Heart right ventricle (tissue), 16 donors: ENCODE measurements at regions of chr17 and their contacts with region 1.

Region 1: DNA sequence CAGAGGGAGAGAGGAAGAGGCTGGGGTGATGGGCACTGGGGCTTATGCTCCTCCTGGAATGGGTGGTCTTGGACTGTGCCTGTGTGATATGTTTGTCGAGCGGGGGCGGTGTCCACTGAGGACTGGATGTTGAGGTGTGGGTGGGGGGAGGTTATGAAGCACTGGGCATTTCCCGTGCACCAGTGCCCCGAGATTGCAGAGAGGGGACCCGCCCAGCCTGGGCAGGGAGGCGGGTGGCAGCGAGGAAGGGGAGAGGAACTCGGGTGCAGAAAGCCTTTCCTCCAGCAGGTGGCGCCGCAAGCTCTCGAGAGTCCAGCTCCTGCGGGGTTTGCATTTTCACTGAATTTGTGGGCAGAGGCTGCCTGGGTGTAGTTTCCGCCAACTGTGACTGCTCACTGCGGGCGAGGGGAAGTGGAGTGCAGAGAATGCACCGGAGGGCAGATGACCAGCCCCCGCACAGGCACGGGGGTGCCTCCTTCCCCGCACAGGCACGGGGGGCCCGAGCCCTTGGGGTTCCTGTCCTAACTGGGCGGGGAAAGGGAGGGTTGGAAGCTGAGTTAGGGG is 190.6 kb downstream of the SEC14L1 start:
- DNase-seq: peak; percentile 94 to 95
- ATAC-seq: peak; percentile 86 to 94 (median 91)
- H3K4me3 ChIP-seq: peak overlapping the region in 6 of 10 donors; percentile 26 to 46 (median 34)
- H3K27ac ChIP-seq: peak overlapping the region in 7 of 10 donors; percentile 15 to 80 (median 62)
- H3K4me1 ChIP-seq: peaks cover 0 to 40% (median 12%) of the 10 kb centered on the region in 9 donors
- H3K27me3 ChIP-seq: no peaks in the 10 kb centered on the region
- CTCF ChIP-seq: peak; percentile 92 to 98 (median 96)

Region 2: DNA sequence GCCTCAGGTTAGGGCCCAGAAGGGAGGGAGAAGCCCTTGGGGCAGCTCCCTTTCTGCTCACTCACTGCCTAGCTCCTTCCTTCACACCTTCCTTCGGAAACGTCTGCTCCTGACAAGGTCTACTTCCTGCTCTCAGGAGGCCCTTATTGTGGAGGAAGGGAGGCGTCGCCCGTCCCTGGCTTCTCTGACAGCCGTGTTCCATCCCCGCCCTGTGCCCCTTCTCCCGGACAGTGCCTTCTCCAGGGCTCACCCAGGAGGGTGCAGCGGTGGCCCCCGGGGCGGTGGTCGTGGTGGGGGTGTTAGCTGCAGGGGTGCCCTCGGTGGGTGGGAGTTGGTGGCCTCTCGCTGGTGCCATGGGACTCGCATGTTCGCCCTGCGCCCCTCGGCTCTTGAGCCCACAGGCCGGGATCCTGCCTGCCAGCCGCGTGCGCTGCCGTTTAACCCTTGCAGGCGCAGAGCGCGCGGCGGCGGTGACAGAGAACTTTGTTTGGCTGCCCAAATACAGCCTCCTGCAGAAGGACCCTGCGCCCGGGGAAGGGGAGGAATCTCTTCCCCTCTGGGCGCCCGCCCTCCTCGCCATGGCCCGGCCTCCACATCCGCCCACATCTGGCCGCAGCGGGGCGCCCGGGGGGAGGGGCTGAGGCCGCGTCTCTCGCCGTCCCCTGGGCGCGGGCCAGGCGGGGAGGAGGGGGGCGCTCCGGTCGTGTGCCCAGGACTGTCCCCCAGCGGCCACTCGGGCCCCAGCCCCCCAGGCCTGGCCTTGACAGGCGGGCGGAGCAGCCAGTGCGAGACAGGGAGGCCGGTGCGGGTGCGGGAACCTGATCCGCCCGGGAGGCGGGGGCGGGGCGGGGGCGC is 41.3 kb after region 1 on chr17:
- intact Hi-C with region 1: loop called in 3 of 10 experiments (anchors 5 kb)
- DNase-seq: peak; percentile 88 to 92
- ATAC-seq: peak; percentile 56 to 75 (median 66)
- H3K4me3 ChIP-seq: peak overlapping the region; percentile 81 to 100 (median 92)
- H3K27ac ChIP-seq: peak overlapping the region; percentile 89 to 99 (median 97)
- H3K4me1 ChIP-seq: peaks cover 46 to 76% (median 72%) of the 10 kb centered on the region in 9 donors
- H3K27me3 ChIP-seq: no peaks in the 10 kb centered on the region
- CTCF ChIP-seq: peak in 2 of 9 donors; percentile 18 to 21

Region 3: DNA sequence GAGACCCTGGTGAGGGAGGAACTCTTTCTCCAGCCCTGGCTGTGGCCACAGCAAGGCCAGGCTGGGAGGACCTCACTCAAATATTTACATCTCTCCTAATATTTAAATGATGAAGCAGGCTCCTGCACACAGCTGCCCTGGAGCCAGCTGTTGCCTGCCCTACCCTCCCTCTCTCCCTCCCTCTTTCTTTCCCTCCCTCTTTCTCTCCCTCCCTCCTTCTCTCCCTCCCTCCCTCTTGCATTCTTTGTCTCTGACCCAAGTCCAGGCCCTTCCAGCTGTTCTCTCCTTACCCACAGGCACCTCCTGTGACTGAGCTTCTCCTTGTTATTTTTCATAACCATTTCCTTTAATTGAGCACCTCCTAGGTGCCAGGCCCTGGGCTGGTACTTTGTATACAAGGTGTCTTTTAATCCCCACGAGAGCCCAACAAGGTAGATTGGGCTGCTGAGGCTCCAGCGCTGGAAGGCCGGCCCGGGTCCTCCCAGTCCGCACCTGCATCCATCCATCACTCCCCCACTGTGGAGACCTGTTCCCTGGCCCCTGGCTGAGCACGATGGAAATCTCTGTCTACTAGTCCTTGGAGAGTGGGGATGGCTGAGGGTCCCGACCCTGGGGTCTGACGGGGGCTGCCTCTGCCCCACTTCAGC is 51.7 kb after region 1 on chr17:
- intact Hi-C with region 1: loop called in 2 of 10 experiments (anchors 5 to 10 kb)
- DNase-seq: peak in 1 of 2 donors; percentile 14
- ATAC-seq: peak in 5 of 8 donors; percentile 11 to 24 (median 15)
- H3K4me3 ChIP-seq: no peak overlapping the region
- H3K27ac ChIP-seq: peak overlapping the region in 9 of 10 donors; percentile 60 to 91 (median 79)
- H3K4me1 ChIP-seq: peaks cover 58 to 100% (median 97%) of the 10 kb centered on the region in 9 donors
- H3K27me3 ChIP-seq: no peaks in the 10 kb centered on the region
- CTCF ChIP-seq: no peak

Region 4: DNA sequence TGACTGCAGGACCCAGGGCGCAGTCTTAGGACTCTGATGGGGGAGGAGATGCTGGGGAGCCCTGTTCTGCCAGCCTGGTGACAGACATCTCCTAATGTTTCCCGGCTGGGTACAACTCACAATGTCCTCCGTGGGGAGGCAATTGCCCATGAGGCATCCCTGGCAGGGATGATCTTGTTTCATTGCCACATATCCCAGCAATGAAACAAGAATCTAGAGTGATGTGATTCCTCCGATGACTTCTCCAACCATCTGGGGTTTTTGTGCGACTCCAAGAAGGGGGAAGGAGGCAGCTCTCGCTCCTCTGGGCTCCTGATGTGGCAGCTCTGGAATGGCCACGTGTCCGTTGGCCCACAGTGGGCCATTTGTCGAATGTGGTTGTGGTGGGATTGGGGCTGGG is 65.2 kb after region 1 on chr17:
- intact Hi-C with region 1: no loop called
- DNase-seq: no peak
- ATAC-seq: no peak
- H3K4me3 ChIP-seq: no peak overlapping the region
- H3K27ac ChIP-seq: no peak overlapping the region
- H3K4me1 ChIP-seq: peaks cover 37 to 78% (median 63%) of the 10 kb centered on the region in 9 donors
- H3K27me3 ChIP-seq: no peaks in the 10 kb centered on the region
- CTCF ChIP-seq: no peak

Region 5: DNA sequence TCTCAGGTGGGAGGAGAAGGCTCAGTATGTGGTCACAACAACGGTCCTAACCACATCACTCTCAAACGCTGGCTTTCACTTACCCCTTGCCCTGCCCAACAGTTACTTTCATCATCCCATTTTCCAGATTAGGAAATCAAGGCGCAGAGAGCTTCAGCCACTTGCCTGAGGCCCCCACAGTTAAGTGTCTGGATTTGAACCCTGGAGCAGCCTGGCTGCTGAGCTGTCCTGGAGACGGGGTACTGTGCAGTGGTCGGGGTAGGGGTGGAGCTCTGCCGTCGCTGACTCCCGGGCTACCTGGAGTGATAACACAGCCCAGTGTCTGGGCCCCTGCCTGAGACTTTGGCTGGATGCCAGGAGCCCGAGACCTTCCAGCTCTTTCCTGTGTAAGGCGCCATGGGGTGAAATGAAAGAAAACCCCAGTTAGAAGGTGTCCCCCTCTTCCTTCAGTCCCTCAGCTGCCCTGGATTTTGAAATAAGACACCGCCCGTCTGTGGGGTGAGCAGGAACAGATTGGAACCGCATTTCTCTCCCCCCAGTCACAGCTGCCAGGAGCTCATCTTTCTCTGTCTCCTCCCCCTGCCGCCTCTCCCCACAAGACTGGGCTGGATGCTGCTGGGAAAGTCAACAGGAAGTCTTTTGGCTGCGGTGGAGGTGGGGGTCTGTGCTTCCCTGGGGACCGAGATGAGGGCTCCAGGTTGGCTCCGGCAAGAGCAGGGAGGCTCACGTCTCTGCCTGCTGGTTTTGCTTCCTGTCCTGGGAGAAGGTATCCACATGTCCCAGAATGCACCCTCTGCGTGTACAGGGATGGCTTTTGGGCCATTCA is 89.6 kb after region 1 on chr17:
- intact Hi-C with region 1: loop called in 8 of 10 experiments (anchors 2 to 10 kb)
- DNase-seq: no peak
- ATAC-seq: peak in 1 of 8 donors; percentile 3
- H3K4me3 ChIP-seq: peak overlapping the region in 1 of 10 donors; percentile 10
- H3K27ac ChIP-seq: peak overlapping the region in 9 of 10 donors; percentile 26 to 90 (median 61)
- H3K4me1 ChIP-seq: peaks cover 37 to 77% (median 71%) of the 10 kb centered on the region in 9 donors
- H3K27me3 ChIP-seq: no peaks in the 10 kb centered on the region
- CTCF ChIP-seq: no peak

Region 6: GRCh38 chr17:77494664-77495435 is 163.5 kb after region 1 on chr17:
- intact Hi-C with region 1: loop called (anchors 1 to 2 kb)
- DNase-seq: peak; percentile 74 to 82
- ATAC-seq: peak; percentile 55 to 82 (median 72)
- H3K4me3 ChIP-seq: no peak overlapping the region
- H3K27ac ChIP-seq: peak overlapping the region in 1 of 10 donors; percentile 40
- H3K4me1 ChIP-seq: peaks cover 9 to 28% (median 18%) of the 10 kb centered on the region in 9 donors
- H3K27me3 ChIP-seq: no peaks in the 10 kb centered on the region
- CTCF ChIP-seq: peak; percentile 95 to 100 (median 98)